GM13977 (cell line): ENCODE measurements at regions of chr6 and their contacts with region 1.

Region 1: DNA sequence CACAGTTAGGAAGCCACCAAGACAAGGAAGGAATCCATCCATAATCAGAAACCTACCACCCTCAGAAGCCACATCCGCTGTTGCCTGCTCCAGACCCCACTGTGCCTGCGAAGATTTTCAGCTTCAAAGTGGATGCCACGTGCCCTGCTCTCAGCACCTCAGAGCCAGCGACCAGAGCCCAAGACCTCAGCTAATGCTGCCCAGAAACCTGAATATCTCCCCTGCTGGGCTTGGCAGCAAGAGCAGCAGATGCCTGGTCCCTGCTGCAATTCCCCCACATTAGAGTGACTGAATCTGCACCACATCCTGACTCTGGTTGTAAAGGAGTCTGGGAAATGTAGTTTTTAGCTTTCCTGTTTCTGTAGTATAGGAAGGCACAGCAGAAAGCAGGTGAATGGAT is 10.7 kb upstream of the ULBP3 start:
- DNase-seq: no peak
- CTCF ChIP-seq: no peak

Region 2: DNA sequence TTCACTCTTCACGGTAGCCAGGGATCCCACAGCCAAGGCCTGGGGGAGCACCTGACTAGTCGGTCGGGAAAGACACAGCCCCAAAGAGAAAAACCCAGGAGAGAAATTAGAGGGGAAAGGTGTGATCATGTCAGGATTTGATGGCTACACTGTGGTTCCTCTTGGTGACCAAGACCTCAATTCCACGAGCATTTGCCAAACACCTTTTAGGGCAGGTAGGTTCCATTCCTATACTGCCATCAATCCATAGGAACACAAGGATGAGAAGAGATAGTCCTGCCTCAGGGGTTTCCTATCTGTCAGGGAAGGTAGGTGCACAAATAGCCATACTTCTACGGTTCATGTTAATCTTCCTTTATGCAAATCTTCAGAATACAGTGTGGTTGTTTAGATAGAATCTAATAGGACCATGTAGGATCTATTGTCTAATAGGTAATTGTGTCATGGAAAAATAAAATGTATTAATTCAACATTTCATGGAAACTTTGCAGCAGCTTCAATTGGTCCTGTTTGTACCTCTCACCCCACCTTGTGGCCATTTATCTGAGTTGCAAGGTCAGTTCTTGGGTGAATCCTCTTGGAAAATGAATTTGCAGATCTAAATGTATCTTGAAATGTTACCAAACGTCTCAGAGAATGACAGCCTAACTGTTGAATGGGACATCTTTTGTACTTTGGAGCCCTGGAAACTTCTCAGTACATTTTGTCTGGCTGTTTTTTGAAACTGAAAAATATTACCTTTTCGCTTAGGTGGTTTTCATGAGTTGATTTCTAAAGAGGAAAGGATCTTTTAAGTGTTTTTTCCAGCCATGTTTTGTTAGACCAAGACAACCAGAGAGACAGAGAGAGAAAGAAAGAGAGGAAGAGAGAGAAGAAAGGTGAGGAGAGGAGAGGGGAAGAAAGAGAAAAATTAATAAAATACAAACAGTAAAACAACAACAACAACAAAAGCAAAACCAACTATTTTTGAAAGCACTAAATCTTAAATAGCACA is 255.5 kb after region 1 on chr6:
- in situ Hi-C with region 1: loop called (anchors 10 kb)
- DNase-seq: peak; percentile 53
- CTCF ChIP-seq: peak; percentile 71

Region 3: DNA sequence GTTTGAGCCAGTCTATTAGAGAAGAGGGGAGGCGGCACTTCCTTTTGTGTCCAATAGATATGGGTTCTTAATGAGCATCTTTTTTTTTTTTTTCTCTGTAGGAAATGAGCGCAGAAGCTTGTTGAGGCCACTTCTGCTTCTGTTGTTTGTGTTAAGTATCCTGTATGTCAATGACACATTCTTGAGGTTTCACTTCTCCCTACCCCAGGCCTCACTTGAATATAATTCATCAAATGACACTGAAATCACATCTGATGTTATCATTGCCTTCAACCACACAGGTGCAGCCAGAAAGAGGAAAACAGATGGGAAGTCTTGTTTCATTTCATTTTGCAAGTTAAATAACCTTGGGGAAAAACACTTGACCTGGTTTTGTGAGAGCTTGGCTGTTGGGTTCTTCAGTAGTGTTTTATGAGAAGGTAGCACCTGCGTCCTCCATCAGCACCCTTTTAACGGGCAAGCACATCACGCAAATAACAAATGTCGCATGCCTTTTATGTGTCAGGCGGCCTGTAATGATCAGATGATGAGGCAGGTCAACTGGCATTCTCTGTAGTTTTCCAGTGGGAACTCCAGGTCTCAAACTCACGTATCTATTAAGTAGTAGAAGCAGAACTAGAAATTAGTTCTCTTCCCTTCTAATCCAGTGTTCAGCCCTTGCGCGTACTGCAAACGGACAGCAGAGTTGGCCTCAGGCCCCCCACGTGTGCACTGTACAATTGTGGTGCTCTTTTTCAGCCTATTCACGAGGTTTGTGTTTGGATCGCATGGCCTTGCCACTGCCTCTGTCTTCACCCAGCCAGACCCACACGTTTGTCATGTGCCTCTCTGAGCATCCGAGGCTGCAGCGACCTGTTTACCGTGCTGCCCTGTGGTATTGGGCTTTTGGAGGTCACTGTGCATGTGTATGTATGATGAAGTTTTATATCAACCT is 543.6 kb after region 1 on chr6:
- in situ Hi-C with region 1: no loop called
- DNase-seq: peak; percentile 59
- CTCF ChIP-seq: no peak